Activated naive CD4-positive, alpha-beta T cell treated with anti-CD3 and anti-CD28 coated beads, Interleukin-2, amount 10 ng/mL, durations not matched to agents 7 days and 5 days (primary cell): ENCODE measurements at regions of chr22 and their contacts with region 1.

Region 1: GRCh38 chr22:30289134-30289979 is at the start of gene CASTOR1:
- DNase-seq: peak; percentile 96
- H3K4me3 Mint-ChIP-seq: peak within 1 kb of the TSS; percentile 81
- H3K27ac Mint-ChIP-seq: peak within 1 kb of the TSS; percentile 87
- H3K4me1 Mint-ChIP-seq: peaks cover 72% of the 10 kb centered on the region
- H3K27me3 Mint-ChIP-seq: no peaks in the 10 kb centered on the region

Region 2: GRCh38 chr22:29901354-29901753 is 388.0 kb before region 1 on chr22:
- CTCF ChIA-PET with region 1: no interaction called
- DNase-seq: no peak
- H3K4me3 Mint-ChIP-seq: no peak overlapping the region
- H3K27ac Mint-ChIP-seq: no peak overlapping the region
- H3K4me1 Mint-ChIP-seq: no peaks in the 10 kb centered on the region
- H3K27me3 Mint-ChIP-seq: no peaks in the 10 kb centered on the region

Region 3: DNA sequence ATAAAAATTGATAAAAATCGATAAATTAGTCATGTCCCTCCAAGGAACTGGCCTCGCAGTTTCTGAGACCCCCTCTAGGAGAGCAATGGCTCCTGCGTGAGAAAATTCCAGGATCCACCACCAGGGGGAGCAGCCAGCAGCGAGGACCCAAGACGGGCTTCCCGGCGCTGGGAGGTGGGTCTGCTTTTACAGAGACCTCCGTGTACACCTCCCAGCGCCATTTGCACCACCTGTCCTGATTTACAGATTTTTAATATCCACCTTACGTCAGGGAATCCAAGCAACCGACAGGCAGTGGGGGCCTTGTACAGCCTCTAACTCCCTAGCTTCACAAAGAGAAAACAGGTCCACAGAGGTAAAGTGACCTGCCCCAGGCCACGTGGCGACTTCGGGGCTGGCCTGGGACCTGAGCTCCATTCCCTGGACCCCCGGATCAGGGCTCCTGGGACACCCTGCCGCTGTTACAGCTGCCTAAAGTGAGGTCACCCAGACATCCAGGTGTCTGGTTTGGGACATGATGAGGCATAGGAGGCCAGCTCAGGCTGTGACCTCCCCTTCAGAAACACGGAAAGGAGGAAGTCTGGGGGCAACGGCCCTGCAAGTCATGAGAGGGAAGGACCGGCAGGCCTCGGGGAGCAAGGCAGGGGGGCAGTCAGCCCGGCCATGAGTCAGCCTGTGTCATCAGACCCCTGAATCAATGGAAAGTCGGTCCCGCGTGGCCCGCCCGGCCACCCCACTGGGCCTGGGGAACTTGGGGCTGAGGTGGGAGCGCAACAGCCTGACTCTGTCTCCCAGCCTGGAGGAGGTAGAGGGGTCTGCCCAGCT is 26.2 kb before region 1 on chr22:
- CTCF ChIA-PET with region 1: interaction called, 59 read pairs
- DNase-seq: peak; percentile 88
- H3K4me3 Mint-ChIP-seq: peak overlapping the region; percentile 100
- H3K27ac Mint-ChIP-seq: peak overlapping the region; percentile 84
- H3K4me1 Mint-ChIP-seq: peaks cover 69% of the 10 kb centered on the region
- H3K27me3 Mint-ChIP-seq: no peaks in the 10 kb centered on the region

Region 4: DNA sequence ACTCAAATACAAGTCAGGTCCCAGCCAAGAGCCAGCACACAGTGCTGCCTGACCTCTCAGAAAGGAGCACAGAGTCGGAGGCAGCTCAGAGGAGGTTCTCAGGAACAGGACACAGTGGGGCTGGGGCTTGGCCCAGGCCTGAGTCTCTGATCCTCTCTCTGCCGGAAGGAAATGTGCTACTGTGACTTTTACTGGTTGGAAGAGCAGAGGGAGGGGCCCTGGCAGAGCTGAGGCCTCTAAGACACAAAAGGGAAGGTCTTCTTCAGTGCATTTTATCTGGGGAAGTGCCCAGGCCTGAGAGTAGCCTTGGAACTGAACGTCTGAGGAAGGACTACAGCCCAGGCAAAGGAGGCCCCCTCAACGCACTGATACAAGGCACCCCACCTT is 16.2 kb after region 1 on chr22:
- CTCF ChIA-PET with region 1: interaction called, 57 read pairs
- DNase-seq: peak; percentile 81
- H3K4me3 Mint-ChIP-seq: peak overlapping the region; percentile 79
- H3K27ac Mint-ChIP-seq: peak overlapping the region; percentile 96
- H3K4me1 Mint-ChIP-seq: peaks cover 99% of the 10 kb centered on the region
- H3K27me3 Mint-ChIP-seq: no peaks in the 10 kb centered on the region

Region 5: GRCh38 chr22:30326706-30327362 is 37.5 kb after region 1 on chr22 and contains the start of gene TBC1D10A:
- CTCF ChIA-PET with region 1: interaction called, 62 read pairs
- DNase-seq: peak; percentile 96
- H3K4me3 Mint-ChIP-seq: peak within 1 kb of the TSS; percentile 92
- H3K27ac Mint-ChIP-seq: peak within 1 kb of the TSS; percentile 88
- H3K4me1 Mint-ChIP-seq: peaks cover 50% of the 10 kb centered on the region
- H3K27me3 Mint-ChIP-seq: no peaks in the 10 kb centered on the region

Region 6: DNA sequence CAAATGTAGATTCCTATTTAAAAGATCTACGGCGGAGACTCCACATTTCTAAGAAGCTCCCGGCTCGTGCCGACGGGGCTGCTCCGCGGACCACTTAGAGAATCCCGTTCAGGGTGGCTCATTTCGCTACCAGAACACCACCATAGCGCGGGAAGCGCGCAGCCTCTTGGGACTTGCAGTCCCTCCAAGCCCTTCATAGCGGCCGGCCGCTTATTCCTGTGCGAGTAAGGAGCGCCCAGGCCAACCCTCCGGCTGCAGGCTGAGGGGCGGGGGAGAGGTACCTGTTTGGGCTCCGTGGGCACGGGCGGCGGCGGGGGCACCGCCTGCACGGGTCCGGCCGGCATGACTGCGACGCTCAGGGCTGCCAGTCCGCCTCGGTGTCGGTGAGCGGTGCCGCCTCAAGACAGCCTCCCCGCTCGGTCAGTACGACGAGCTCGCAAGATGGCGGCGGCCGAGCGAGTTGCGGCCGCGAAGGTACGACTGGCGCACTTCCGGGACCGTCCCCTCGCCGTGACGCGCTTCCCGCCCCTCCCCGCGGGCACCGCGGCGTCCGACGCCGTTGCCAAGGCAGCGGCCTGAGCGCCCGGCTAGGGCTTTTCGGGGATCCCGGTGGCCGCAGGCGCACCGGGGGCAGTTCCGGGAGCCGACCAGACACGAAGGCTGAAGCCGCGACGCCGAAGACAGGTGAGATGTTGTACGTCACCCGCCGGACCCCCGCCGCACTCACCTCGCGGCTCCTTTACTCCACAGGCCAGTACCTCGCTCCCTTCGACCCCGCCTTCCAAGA is 67.3 kb after region 1 on chr22 and contains the starts of genes CCDC157 and SF3A1:
- CTCF ChIA-PET with region 1: interaction called, 10 read pairs
- DNase-seq: peak; percentile 92
- H3K4me3 Mint-ChIP-seq: peak within 1 kb of the TSS; percentile 94
- H3K27ac Mint-ChIP-seq: peak within 1 kb of the TSS; percentile 88
- H3K4me1 Mint-ChIP-seq: peaks cover 49% of the 10 kb centered on the region
- H3K27me3 Mint-ChIP-seq: peaks cover 18% of the 10 kb centered on the region

Region 7: DNA sequence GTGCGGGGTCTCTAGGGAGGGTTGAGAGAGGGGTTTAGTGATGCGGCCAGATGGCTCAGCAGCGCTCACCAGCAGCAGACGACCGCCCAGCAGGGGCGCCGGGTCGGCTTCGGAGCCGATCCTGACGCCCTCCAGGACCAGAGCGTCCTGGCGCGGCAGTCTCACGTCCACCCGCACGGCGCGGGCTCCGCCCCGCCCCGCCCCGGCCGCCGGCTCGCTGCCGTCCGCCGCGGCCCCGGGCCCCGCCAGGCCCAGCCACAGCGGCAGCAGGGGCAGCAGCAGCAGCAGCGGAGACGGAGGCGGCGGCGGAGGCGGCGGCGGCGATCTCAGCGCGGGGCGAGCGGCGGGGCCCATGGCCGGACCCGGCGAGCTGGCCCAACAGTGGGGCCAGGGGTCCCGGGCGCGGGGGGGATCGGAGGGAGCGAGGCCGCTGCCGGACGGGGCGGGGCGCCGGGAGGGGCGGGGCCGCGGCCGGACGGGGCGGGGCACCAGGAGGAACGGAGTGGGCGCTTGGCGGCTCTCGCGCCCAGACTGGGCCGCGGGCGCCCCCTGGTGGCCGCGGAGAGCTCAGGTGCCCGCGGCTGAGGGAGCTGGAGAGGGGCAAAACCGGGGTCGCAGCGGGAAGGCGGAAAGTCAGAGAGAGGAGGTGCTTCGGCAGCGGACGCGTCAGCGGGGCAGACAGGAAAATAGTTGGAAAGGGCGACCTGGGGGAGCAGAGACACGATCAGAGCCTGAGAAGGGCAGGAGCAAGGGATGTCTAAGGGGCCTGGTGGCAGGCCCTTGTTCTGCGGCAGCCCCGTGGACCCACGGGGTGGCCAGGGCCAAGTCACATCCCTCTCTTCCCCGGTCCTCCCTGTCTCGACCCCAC is 97.8 kb after region 1 on chr22 and contains the start of gene RNF215:
- CTCF ChIA-PET with region 1: interaction called, 252 read pairs
- DNase-seq: peak; percentile 82
- H3K4me3 Mint-ChIP-seq: peak within 1 kb of the TSS; percentile 79
- H3K27ac Mint-ChIP-seq: peak within 1 kb of the TSS; percentile 76
- H3K4me1 Mint-ChIP-seq: peaks cover 31% of the 10 kb centered on the region
- H3K27me3 Mint-ChIP-seq: peaks cover 13% of the 10 kb centered on the region

Region 8: GRCh38 chr22:30423982-30424963 is 134.9 kb after region 1 on chr22:
- CTCF ChIA-PET with region 1: interaction called, 20 read pairs
- DNase-seq: peak; percentile 99
- H3K4me3 Mint-ChIP-seq: peak overlapping the region; percentile 98
- H3K27ac Mint-ChIP-seq: peak overlapping the region; percentile 98
- H3K4me1 Mint-ChIP-seq: peaks cover 64% of the 10 kb centered on the region
- H3K27me3 Mint-ChIP-seq: no peaks in the 10 kb centered on the region